Activated naive CD4-positive, alpha-beta T cell treated with anti-CD3 and anti-CD28 coated beads for 36 hours (primary cell): ENCODE measurements at regions of chr7 and their contacts with region 1.

Region 1: DNA sequence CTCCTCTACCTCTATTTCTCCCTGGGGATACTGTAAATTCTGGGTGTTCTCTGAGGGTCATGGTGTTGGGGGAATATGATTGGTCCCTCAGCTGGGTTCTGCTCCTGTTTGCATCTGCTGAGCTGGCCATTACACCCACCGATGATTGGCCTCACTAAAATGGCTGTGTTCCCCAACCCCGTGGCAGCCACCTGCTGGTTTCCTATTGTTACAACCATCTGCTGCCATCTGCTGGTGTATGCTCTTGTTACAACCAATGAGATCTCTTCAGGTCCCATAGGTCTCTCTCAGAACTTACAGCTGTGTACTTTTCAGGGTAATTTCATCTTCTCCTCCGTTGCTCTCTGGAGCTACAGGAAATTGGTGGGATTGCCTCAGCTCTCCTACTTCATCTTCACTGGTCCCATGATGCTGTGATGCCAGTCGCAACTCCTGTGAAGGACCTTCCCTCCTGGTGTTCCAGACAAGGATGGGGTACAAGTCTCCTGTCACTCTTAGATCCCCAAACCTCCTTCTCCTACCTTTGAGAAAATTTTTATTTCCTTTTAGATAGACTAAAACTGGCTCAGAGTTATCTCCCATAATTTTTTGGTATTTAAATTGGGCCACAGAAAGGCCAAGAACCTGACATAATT is 303.5 kb upstream of the SMIM30 start:
- DNase-seq: peak; percentile 91
- H3K4me3 Mint-ChIP-seq: no peak overlapping the region
- H3K27ac Mint-ChIP-seq: no peak overlapping the region
- H3K4me1 Mint-ChIP-seq: peaks cover 3% of the 10 kb centered on the region
- H3K27me3 Mint-ChIP-seq: peaks cover 2% of the 10 kb centered on the region

Region 2: GRCh38 chr7:111741811-111742240 is 1680.0 kb before region 1 on chr7:
- CTCF ChIA-PET with region 1: no interaction called
- intact Hi-C with region 1: loop called (anchors 1 kb)
- DNase-seq: peak; percentile 55
- H3K4me3 Mint-ChIP-seq: no peak overlapping the region
- H3K27ac Mint-ChIP-seq: no peak overlapping the region
- H3K4me1 Mint-ChIP-seq: no peaks in the 10 kb centered on the region
- H3K27me3 Mint-ChIP-seq: peaks cover 2% of the 10 kb centered on the region

Region 3: GRCh38 chr7:112898432-112899290 is 523.2 kb before region 1 on chr7:
- CTCF ChIA-PET with region 1: no interaction called
- intact Hi-C with region 1: loop called (anchors 1 kb)
- DNase-seq: peak; percentile 61
- H3K4me3 Mint-ChIP-seq: no peak overlapping the region
- H3K27ac Mint-ChIP-seq: no peak overlapping the region
- H3K4me1 Mint-ChIP-seq: no peaks in the 10 kb centered on the region
- H3K27me3 Mint-ChIP-seq: no peaks in the 10 kb centered on the region

Region 4: DNA sequence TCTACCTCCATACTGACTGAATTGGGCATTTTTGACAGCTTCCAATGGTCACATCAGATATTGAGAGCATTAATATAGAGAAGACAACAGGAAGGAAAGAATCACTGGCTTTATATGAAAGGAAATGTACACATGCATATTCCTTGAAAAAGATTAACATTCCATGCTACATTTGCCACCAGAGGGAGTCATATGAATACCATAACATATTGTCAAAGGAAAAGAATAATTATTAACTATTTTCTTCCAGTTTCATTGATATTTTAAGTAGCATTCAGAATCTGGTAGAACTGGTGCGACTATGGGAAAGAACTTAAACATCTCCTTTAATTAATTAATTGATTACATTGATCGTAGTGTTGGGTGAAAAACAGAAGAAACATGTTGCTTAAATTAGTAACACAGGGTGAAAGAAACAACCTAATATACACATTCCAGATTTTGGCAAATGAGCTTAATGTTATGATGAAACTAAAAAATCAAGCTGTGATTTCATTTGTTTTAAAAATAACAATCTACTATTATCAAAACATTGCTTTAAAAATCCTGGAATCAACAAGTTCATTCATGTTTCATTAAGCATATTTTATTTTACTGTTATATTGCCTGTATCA is 406.7 kb before region 1 on chr7:
- CTCF ChIA-PET with region 1: interaction called, 3 read pairs
- intact Hi-C with region 1: loop called (anchors 1 kb)
- DNase-seq: no peak
- H3K4me3 Mint-ChIP-seq: no peak overlapping the region
- H3K27ac Mint-ChIP-seq: no peak overlapping the region
- H3K4me1 Mint-ChIP-seq: no peaks in the 10 kb centered on the region
- H3K27me3 Mint-ChIP-seq: no peaks in the 10 kb centered on the region

Region 5: GRCh38 chr7:113159746-113160339 is 262.0 kb before region 1 on chr7:
- CTCF ChIA-PET with region 1: interaction called, 6 read pairs
- intact Hi-C with region 1: loop called (anchors 1 kb)
- DNase-seq: peak; percentile 10
- H3K4me3 Mint-ChIP-seq: no peak overlapping the region
- H3K27ac Mint-ChIP-seq: no peak overlapping the region
- H3K4me1 Mint-ChIP-seq: no peaks in the 10 kb centered on the region
- H3K27me3 Mint-ChIP-seq: peaks cover 10% of the 10 kb centered on the region